ENCODE measurements at regions of chr21 and their contacts with region 1.

Region 1: DNA sequence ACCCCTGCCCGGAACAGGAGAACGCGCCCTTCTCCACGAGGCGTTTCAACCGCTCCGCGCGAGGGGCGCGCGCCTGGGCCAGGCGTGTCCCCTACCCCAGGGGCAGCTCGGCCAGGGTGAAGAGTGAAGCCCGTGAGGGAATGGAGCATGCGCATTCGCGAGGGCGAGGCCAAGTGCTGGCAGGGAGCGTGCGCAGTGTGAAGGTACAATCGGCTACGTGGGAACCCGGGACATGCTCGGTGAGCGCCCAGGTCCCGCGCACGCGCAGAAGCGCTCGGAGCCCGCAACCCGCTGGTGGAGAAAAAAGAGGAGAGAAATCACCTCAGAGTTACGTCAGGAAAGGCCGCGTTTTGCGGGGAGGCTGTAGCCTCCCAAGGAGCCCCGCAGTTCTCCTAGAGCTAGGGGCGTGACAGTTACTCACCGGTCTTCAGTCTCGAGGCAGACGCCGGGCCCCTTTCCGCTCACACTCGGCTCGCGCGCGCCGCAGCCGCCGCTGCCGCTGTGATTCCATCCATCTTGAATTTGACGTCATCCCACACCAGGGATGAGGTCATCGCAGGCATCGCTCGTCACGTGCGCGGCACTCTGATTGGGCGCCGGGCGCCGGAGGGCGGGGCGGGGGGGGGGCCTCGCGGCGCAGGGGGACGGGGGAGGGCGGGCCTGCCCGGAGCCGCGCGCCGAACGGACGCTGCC is at the start of gene ZBTB21:
- DNase-seq: peak; percentile 98
- H3K4me3 Mint-ChIP-seq: peak within 1 kb of the TSS; percentile 78
- H3K27ac Mint-ChIP-seq: peak within 1 kb of the TSS; percentile 95
- H3K4me1 Mint-ChIP-seq: peaks cover 18% of the 10 kb centered on the region
- H3K27me3 Mint-ChIP-seq: no peaks in the 10 kb centered on the region
- CTCF ChIP-seq: no peak
- total RNA-seq, gene ZBTB21: 21.5 and 27.3 TPM in 2 replicates

Region 2: DNA sequence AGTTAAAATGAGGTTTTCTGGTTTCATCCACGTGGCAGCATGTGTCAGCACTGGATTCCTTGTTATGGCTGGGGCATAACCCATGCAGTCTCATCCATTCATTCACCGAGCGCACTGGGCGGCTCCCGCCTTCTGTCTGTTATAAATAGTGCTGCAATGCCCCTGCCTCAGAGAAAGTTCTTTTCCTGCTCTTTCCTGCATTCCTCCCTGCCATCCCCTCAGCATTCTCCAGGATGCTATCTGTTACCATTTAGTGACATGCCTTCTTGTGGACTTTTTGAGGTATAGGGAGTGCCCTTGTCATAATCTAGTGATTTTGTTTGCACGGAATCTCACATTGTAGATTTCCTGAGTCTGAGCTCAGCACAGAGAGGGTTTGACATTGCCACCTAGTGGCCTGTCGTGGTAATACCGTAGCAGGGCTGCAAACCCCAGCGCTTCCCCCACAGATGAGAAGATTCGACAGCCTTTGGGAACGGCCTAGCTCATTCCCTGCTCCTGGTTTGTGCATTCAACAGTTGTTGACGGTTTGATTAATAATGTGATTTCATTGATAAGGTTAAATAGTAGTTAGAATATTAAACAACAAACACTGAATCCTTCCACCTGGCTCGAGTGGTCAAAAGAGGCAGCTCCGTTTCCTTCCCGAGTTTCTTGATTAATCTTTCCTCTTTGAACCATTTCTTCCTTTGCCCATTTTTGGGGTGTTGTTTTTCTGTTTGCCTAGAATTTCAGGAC is 107.4 kb after region 1 on chr21:
- CTCF ChIA-PET with region 1: interaction called, 9 read pairs
- POLR2A ChIA-PET with region 1: interaction called, 4 read pairs
- intact Hi-C with region 1: loop called (anchors 2 kb)
- DNase-seq: peak; percentile 67
- H3K4me3 Mint-ChIP-seq: no peak overlapping the region
- H3K27ac Mint-ChIP-seq: no peak overlapping the region
- H3K4me1 Mint-ChIP-seq: peaks cover 40% of the 10 kb centered on the region
- H3K27me3 Mint-ChIP-seq: peaks cover 48% of the 10 kb centered on the region
- CTCF ChIP-seq: peak; percentile 85